CD4-positive, alpha-beta memory T cell (primary cell): ENCODE measurements at regions of chr1 and their contacts with region 1.

Region 1: GRCh38 chr1:29181413-29182225 is at the start of gene SRSF4:
- DNase-seq: peak; percentile 98 to 99 (median 99)
- H3K4me3 ChIP-seq: peak within 1 kb of the TSS; percentile 86 to 99
- H3K4me3 Mint-ChIP-seq: peak within 1 kb of the TSS; percentile 93 to 97 (median 95)
- H3K27ac ChIP-seq: peak within 1 kb of the TSS; percentile 93
- H3K27ac Mint-ChIP-seq: peak within 1 kb of the TSS; percentile 93 to 97 (median 95)
- H3K4me1 ChIP-seq: peaks cover 51% of the 10 kb centered on the region
- H3K4me1 Mint-ChIP-seq: peaks cover 30 to 64% (median 45%) of the 10 kb centered on the region in 4 donors
- H3K27me3 ChIP-seq: no peaks in the 10 kb centered on the region
- H3K27me3 Mint-ChIP-seq: no peaks in the 10 kb centered on the region
- total RNA-seq, gene SRSF4: 83.3 to 86.8 TPM

Region 2: DNA sequence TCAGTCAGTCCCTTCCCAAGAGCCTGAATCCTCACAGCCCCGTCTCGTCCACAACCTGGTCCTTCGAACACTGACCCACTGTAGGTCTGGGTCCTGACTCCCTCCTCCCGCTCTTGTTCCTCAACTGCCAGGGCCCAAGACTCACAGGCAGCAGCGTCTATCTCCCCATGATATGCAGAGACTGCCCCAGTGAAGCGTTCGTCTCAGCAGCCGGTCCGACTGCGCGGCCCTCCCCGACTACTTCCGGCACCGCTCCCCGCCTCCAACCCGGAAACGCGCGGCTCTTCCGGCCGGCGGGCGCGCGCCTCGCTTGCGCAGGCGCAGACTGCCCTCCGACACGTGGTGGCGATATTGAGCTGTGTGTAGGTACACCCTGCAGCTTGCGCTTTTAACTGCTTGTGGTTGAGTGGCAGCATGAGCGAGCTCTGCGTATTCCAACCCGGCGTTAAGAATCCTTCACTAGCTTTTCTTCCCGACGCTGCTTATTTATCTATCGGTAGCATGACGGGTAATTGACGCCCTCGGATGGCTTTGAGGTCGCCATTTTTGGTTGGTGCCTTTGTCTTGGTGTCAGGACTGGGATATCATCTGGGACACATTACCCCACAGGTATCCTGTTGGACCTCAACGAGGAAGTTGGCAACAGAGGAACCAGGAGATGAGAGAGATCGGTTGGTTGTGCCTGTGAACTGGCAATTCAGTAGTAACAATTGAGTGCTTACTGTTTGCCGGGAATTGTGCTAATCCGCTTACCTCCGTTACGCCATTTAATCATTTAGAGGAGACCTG is 538.6 kb before region 1 on chr1 and contains the start of gene TAF12:
- CTCF ChIA-PET with region 1: interaction called, 6 read pairs
- POLR2A ChIA-PET with region 1: interaction called, 25 read pairs
- intact Hi-C with region 1: loop called (anchors 1 kb)
- DNase-seq: peak; percentile 88 to 92 (median 91)
- H3K4me3 ChIP-seq: peak within 1 kb of the TSS; percentile 89 to 99
- H3K4me3 Mint-ChIP-seq: peak within 1 kb of the TSS; percentile 96 to 100 (median 99)
- H3K27ac ChIP-seq: peak within 1 kb of the TSS; percentile 74
- H3K27ac Mint-ChIP-seq: peak within 1 kb of the TSS; percentile 97 to 100 (median 98)
- H3K4me1 ChIP-seq: peaks cover 48% of the 10 kb centered on the region
- H3K4me1 Mint-ChIP-seq: peaks cover 32 to 62% (median 46%) of the 10 kb centered on the region in 4 donors
- H3K27me3 ChIP-seq: no peaks in the 10 kb centered on the region
- H3K27me3 Mint-ChIP-seq: no peaks in the 10 kb centered on the region
- total RNA-seq, gene TAF12: 23.5 to 25.2 TPM

Region 3: DNA sequence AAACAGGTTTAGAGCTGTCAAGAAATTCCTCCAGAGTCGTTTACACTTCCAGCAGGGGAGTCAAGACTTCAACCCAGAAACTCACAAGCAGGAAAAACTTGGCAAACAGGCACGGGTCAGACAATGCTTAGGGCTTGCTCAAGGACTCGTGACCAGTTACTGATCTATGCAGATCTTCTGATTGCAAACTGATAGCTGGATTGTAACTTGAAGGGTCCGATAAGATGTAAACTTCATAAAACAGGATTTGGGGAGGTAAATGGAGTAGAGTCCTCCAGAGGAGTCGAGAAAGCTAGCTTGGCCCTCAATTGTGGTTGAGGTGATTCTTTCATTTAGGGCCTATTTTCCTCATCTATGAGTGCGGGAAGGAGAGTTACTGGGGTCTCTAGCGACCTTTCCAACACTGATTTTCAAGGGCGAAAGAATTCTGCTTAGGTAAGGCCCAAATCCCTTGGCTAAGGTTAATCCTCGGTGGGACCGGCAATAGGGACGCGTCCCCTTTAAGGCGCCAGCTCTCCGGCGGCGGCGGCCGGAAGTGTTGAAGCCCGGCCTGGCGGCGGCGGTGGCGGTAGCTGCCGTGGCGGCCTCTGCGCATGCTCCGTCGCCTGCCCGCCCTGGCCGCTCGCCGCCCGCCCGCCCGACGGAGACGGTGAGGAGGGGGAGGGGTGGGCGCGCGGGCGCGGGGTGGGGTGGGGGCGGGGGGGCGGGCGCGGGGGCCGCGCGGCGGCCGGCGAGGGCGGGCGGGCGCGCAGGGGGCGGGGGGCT is 513.2 kb before region 1 on chr1 and contains the start of gene GMEB1:
- CTCF ChIA-PET with region 1: no interaction called
- POLR2A ChIA-PET with region 1: interaction called, 29 read pairs
- intact Hi-C with region 1: loop called (anchors 5 kb)
- DNase-seq: peak; percentile 79 to 86 (median 84)
- H3K4me3 ChIP-seq: peak within 1 kb of the TSS; percentile 89 to 92
- H3K4me3 Mint-ChIP-seq: peak within 1 kb of the TSS; percentile 92 to 97 (median 93)
- H3K27ac ChIP-seq: peak within 1 kb of the TSS; percentile 88
- H3K27ac Mint-ChIP-seq: peak within 1 kb of the TSS; percentile 98 to 100 (median 98)
- H3K4me1 ChIP-seq: peaks cover 21% of the 10 kb centered on the region
- H3K4me1 Mint-ChIP-seq: peaks cover 13 to 26% (median 18%) of the 10 kb centered on the region in 4 donors
- H3K27me3 ChIP-seq: no peaks in the 10 kb centered on the region
- H3K27me3 Mint-ChIP-seq: no peaks in the 10 kb centered on the region
- total RNA-seq, gene GMEB1: 21.8 to 21.9 TPM

Region 4: DNA sequence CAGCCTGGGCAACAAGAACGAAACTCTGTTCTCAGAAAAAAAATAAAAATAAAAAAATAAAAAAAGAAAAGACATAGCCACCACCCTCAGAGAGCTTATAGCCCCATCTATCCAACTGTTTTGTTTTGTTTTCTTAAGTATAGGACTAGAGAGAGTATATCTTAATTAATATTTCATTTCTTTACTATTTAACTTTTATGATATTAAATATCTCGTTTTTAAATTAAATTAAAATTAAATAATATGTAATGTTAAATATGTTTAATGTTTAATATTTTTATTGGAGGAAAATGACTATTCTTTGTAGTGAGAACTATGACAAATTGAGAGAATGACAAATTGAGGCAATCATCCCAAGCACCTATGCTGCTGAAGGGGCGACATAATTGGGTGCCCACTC is 478.0 kb before region 1 on chr1:
- CTCF ChIA-PET with region 1: no interaction called
- POLR2A ChIA-PET with region 1: no interaction called
- intact Hi-C with region 1: no loop called
- DNase-seq: no peak
- H3K4me3 ChIP-seq: no peak overlapping the region
- H3K4me3 Mint-ChIP-seq: no peak overlapping the region
- H3K27ac ChIP-seq: no peak overlapping the region
- H3K27ac Mint-ChIP-seq: no peak overlapping the region
- H3K4me1 ChIP-seq: no peaks in the 10 kb centered on the region
- H3K4me1 Mint-ChIP-seq: peaks cover 0 to 2% (median 0%) of the 10 kb centered on the region in 4 donors
- H3K27me3 ChIP-seq: no peaks in the 10 kb centered on the region
- H3K27me3 Mint-ChIP-seq: no peaks in the 10 kb centered on the region

Region 5: GRCh38 chr1:28756846-28757245 is 424.8 kb before region 1 on chr1:
- CTCF ChIA-PET with region 1: no interaction called
- POLR2A ChIA-PET with region 1: no interaction called
- intact Hi-C with region 1: no loop called
- DNase-seq: peak in 2 of 5 donors; percentile 6 to 16
- H3K4me3 ChIP-seq: no peak overlapping the region
- H3K4me3 Mint-ChIP-seq: peak overlapping the region in 1 of 8 donors; percentile 52
- H3K27ac ChIP-seq: no peak overlapping the region
- H3K27ac Mint-ChIP-seq: peak overlapping the region in 2 of 7 donors; percentile 57
- H3K4me1 ChIP-seq: peaks cover 63% of the 10 kb centered on the region
- H3K4me1 Mint-ChIP-seq: peaks cover 21 to 36% (median 30%) of the 10 kb centered on the region in 4 donors
- H3K27me3 ChIP-seq: no peaks in the 10 kb centered on the region
- H3K27me3 Mint-ChIP-seq: no peaks in the 10 kb centered on the region

Region 6: GRCh38 chr1:28886731-28887418 is 294.7 kb before region 1 on chr1:
- CTCF ChIA-PET with region 1: interaction called, 9 read pairs
- POLR2A ChIA-PET with region 1: interaction called, 19 read pairs
- intact Hi-C with region 1: loop called (anchors 1 kb)
- DNase-seq: peak; percentile 90 to 94 (median 92)
- H3K4me3 ChIP-seq: peak overlapping the region; percentile 39 to 95
- H3K4me3 Mint-ChIP-seq: peak overlapping the region; percentile 84 to 96 (median 89)
- H3K27ac ChIP-seq: peak overlapping the region; percentile 88
- H3K27ac Mint-ChIP-seq: peak overlapping the region; percentile 93 to 100 (median 98)
- H3K4me1 ChIP-seq: peaks cover 64% of the 10 kb centered on the region
- H3K4me1 Mint-ChIP-seq: peaks cover 45 to 71% (median 61%) of the 10 kb centered on the region in 4 donors
- H3K27me3 ChIP-seq: no peaks in the 10 kb centered on the region
- H3K27me3 Mint-ChIP-seq: peaks cover 0 to 4% of the 10 kb centered on the region in 2 donors

Region 7: DNA sequence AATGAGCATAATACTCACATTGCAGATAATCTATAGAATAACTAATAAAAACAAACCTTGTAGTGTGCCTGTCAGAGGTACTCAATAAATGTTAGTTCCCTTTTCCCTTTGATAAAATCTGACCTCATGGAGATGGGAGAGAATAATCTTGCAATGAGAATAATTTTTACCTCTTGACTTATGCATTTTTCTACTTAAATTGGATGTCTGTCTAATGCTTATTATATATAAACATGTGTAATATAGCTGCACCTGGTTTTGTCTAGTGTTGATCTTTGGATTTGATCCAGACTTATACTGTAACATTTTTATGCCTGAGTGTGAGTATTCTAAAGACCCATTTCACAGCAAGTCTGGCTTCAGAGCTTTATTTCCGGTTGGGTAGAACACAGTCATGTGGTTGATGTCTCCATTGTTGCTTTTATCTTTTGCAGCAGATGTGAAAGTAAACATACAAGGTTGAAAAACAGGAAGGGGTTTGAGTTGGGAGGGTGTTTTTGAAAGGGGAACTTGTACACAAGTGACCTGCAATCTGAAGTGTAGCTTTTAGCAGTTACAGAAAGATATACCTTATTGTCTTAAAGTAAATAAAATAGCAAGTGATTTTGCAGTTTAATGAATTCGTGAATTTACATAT is 254.9 kb before region 1 on chr1:
- CTCF ChIA-PET with region 1: no interaction called
- POLR2A ChIA-PET with region 1: interaction called, 16 read pairs
- intact Hi-C with region 1: no loop called
- DNase-seq: peak; percentile 77 to 85 (median 82)
- H3K4me3 ChIP-seq: peak overlapping the region; percentile 0 to 21
- H3K4me3 Mint-ChIP-seq: peak overlapping the region; percentile 56 to 84 (median 76)
- H3K27ac ChIP-seq: peak overlapping the region; percentile 67
- H3K27ac Mint-ChIP-seq: peak overlapping the region; percentile 72 to 97 (median 85)
- H3K4me1 ChIP-seq: peaks cover 93% of the 10 kb centered on the region
- H3K4me1 Mint-ChIP-seq: peaks cover 38 to 71% (median 54%) of the 10 kb centered on the region in 4 donors
- H3K27me3 ChIP-seq: no peaks in the 10 kb centered on the region
- H3K27me3 Mint-ChIP-seq: no peaks in the 10 kb centered on the region

Region 8: DNA sequence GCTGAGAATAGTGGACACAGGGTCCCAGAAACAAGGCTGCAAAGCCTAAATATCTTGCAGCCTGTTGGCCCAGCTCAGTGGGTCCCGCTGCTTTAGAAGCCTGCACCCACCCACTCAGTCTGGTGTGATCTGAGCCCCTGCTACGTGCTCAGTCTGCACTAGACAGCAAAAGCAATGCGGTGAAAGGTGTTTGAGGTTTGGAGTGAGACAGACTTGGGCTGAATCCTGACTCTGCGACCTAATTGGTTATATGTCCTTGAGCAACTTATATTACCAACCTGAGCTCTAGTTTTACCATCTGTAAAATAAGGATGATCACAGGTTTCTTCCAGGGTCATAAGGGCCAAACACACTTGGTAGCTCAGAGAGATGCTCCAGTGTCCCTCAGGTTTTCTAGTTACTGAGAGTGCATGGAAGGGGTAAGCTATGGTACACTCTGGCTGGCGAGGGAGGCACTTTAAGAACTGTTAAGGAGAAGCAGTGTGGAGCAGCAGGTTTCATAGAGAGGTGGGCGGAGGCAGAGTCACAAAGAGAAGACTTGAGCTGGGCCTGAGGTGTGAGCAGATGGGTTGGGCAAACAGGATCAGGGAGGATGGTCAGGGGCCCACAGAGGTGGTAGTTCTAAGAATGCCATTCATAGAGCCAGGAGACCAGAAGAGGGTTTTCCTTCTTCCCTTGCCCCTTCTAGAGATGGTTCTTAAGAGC is 68.1 kb before region 1 on chr1:
- CTCF ChIA-PET with region 1: no interaction called
- POLR2A ChIA-PET with region 1: no interaction called
- intact Hi-C with region 1: no loop called
- DNase-seq: no peak
- H3K4me3 ChIP-seq: no peak overlapping the region
- H3K4me3 Mint-ChIP-seq: peak overlapping the region in 1 of 8 donors; percentile 23
- H3K27ac ChIP-seq: no peak overlapping the region
- H3K27ac Mint-ChIP-seq: peak overlapping the region in 2 of 7 donors; percentile 12 to 33
- H3K4me1 ChIP-seq: no peaks in the 10 kb centered on the region
- H3K4me1 Mint-ChIP-seq: peaks cover 0 to 2% (median 0%) of the 10 kb centered on the region in 4 donors
- H3K27me3 ChIP-seq: no peaks in the 10 kb centered on the region
- H3K27me3 Mint-ChIP-seq: no peaks in the 10 kb centered on the region

Region 9: GRCh38 chr1:29171089-29171488 is 10.5 kb before region 1 on chr1:
- CTCF ChIA-PET with region 1: interaction called, 10 read pairs
- POLR2A ChIA-PET with region 1: interaction called, 26 read pairs
- intact Hi-C with region 1: no loop called
- DNase-seq: no peak
- H3K4me3 ChIP-seq: no peak overlapping the region
- H3K4me3 Mint-ChIP-seq: peak overlapping the region in 6 of 8 donors; percentile 14 to 78 (median 59)
- H3K27ac ChIP-seq: no peak overlapping the region
- H3K27ac Mint-ChIP-seq: peak overlapping the region in 5 of 7 donors; percentile 6 to 84 (median 32)
- H3K4me1 ChIP-seq: peaks cover 58% of the 10 kb centered on the region
- H3K4me1 Mint-ChIP-seq: peaks cover 49 to 73% (median 62%) of the 10 kb centered on the region in 4 donors
- H3K27me3 ChIP-seq: no peaks in the 10 kb centered on the region
- H3K27me3 Mint-ChIP-seq: no peaks in the 10 kb centered on the region

Region 10: DNA sequence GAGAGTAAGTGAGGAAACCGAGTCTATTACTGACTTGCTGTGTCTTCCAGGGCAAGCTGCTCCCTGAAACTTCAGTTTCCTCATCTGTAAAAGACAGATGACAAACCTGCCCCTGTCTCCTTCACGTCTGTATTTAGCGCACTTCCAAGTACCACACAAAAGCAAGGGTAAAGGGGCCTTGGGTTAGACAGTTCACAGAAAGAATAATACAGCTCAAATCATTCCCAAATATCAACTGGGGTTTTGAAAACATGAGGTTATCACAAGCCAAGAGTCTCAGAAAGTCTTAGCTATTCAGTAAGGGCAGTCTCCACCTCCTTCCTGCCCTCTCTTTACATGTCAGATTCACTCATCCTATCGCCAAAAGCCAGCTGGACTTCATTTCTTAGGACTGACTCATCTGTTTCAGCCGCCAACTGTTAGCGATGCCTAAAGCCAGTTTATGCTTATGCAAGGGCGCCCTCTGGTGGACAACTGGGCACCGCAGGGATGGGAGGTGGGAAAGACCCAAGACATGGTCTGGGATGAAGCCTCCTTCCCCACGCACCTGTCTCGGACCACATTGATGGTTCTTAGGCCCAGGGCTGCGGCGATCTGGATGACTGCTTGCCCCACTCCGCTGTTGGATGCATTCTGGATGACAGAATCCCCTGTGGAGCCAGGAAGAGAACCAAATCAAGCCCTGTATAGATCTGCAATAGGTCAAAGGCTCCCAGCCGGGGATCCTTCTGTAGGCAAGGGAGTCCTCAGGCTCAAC is 21.1 kb after region 1 on chr1:
- CTCF ChIA-PET with region 1: interaction called, 45 read pairs
- POLR2A ChIA-PET with region 1: interaction called, 22 read pairs
- intact Hi-C with region 1: loop called (anchors 1 kb)
- DNase-seq: peak; percentile 73 to 81 (median 76)
- H3K4me3 ChIP-seq: no peak overlapping the region
- H3K4me3 Mint-ChIP-seq: no peak overlapping the region
- H3K27ac ChIP-seq: no peak overlapping the region
- H3K27ac Mint-ChIP-seq: peak overlapping the region in 2 of 7 donors; percentile 12 to 24
- H3K4me1 ChIP-seq: no peaks in the 10 kb centered on the region
- H3K4me1 Mint-ChIP-seq: peaks cover 0 to 7% (median 2%) of the 10 kb centered on the region in 4 donors
- H3K27me3 ChIP-seq: no peaks in the 10 kb centered on the region
- H3K27me3 Mint-ChIP-seq: no peaks in the 10 kb centered on the region

Region 11: DNA sequence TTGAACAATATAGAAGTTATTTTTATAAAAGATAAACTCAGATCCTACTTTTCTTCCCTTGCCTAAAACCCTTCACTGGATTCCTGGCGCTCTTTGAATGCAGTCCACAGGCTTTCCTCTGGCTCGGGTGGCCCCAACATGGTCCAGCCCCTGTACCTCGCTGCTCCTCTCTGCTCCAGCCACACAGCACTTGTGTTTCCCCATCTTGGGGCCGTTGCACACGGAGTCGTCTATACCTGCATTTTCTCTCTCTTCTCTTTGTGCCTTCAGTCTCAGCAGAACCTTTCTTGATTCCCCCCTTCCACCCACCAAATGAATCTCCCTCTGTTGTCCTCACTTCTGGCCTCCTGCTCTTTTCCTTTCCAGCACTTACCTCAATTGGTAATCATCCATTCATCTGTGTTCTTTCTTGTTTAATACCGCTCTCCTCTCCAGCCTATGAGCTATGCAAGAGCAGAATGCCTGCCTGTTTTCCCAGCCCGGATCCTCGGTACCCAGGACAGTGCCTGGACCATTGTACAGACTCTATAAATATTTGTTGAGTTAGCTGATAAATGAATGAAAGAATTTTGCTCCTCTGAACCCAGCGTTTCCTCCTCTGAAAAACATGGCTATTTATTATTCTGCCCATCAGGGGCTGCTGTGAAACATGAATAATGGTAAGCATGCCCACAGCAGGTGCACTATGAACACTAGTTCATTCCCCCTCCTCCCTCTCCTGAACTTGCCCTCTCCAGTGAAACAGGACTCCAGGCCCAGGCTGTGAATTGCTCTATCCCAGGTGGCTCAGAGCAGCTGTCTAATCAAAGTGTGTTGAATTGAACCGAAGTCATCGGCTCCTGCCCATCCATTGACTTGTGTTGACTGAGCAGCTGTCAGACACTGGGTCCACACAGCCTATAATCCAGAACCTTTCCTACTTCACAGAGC is 321.6 kb after region 1 on chr1:
- CTCF ChIA-PET with region 1: no interaction called
- POLR2A ChIA-PET with region 1: no interaction called
- intact Hi-C with region 1: no loop called
- DNase-seq: no peak
- H3K4me3 ChIP-seq: no peak overlapping the region
- H3K4me3 Mint-ChIP-seq: no peak overlapping the region
- H3K27ac ChIP-seq: no peak overlapping the region
- H3K27ac Mint-ChIP-seq: no peak overlapping the region
- H3K4me1 ChIP-seq: no peaks in the 10 kb centered on the region
- H3K4me1 Mint-ChIP-seq: no peaks in the 10 kb centered on the region
- H3K27me3 ChIP-seq: no peaks in the 10 kb centered on the region
- H3K27me3 Mint-ChIP-seq: peaks cover 39 to 40% of the 10 kb centered on the region in 2 donors